CD4-positive, alpha-beta memory T cell (primary cell): ENCODE measurements at regions of chr4 and their contacts with region 1.

Region 1: GRCh38 chr4:82284858-82285805 is 88.7 kb downstream of the HNRNPD start:
- DNase-seq: peak; percentile 99
- H3K4me3 ChIP-seq: peak overlapping the region; percentile 25 to 70
- H3K4me3 Mint-ChIP-seq: peak overlapping the region; percentile 81 to 94 (median 86)
- H3K27ac ChIP-seq: peak overlapping the region; percentile 49
- H3K27ac Mint-ChIP-seq: peak overlapping the region; percentile 62 to 91 (median 88)
- H3K4me1 ChIP-seq: peaks cover 12% of the 10 kb centered on the region
- H3K4me1 Mint-ChIP-seq: peaks cover 8 to 19% (median 14%) of the 10 kb centered on the region in 4 donors
- H3K27me3 ChIP-seq: no peaks in the 10 kb centered on the region
- H3K27me3 Mint-ChIP-seq: no peaks in the 10 kb centered on the region

Region 2: DNA sequence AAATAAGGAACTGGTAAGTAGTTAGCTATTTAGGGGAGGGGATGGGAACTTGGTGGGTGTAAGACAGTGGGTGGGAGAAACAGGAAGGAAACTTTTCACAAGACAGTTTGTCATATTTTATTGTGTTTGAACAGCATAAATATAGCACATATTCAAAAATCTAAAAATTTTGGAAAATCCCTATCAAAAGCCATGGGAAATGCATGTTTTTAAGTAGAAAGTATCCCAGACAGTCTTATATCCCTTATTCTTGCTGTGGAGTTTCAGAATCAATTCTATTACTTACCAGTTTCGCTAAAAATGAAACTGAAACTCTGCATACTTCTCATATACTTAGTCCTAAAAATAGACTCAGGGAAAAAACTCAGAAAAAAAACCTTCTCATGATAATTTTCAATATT is 791.1 kb before region 1 on chr4:
- CTCF ChIA-PET with region 1: no interaction called
- POLR2A ChIA-PET with region 1: no interaction called
- intact Hi-C with region 1: loop called (anchors 5 kb)
- DNase-seq: peak in 2 of 5 donors; percentile 30 to 45
- H3K4me3 ChIP-seq: no peak overlapping the region
- H3K4me3 Mint-ChIP-seq: peak overlapping the region; percentile 73 to 88 (median 80)
- H3K27ac ChIP-seq: peak overlapping the region; percentile 59
- H3K27ac Mint-ChIP-seq: peak overlapping the region; percentile 84 to 96 (median 95)
- H3K4me1 ChIP-seq: peaks cover 41% of the 10 kb centered on the region
- H3K4me1 Mint-ChIP-seq: peaks cover 26 to 49% (median 39%) of the 10 kb centered on the region in 4 donors
- H3K27me3 ChIP-seq: no peaks in the 10 kb centered on the region
- H3K27me3 Mint-ChIP-seq: no peaks in the 10 kb centered on the region

Region 3: GRCh38 chr4:82360298-82361177 is 75.4 kb after region 1 on chr4:
- CTCF ChIA-PET with region 1: interaction called, 18 read pairs
- POLR2A ChIA-PET with region 1: interaction called, 10 read pairs
- intact Hi-C with region 1: no loop called
- DNase-seq: peak in 4 of 5 donors; percentile 39 to 42 (median 40)
- H3K4me3 ChIP-seq: no peak overlapping the region
- H3K4me3 Mint-ChIP-seq: peak overlapping the region in 5 of 8 donors; percentile 3 to 54 (median 17)
- H3K27ac ChIP-seq: peak overlapping the region; percentile 22
- H3K27ac Mint-ChIP-seq: peak overlapping the region; percentile 30 to 88 (median 62)
- H3K4me1 ChIP-seq: peaks cover 98% of the 10 kb centered on the region
- H3K4me1 Mint-ChIP-seq: peaks cover 59 to 94% (median 77%) of the 10 kb centered on the region in 4 donors
- H3K27me3 ChIP-seq: no peaks in the 10 kb centered on the region
- H3K27me3 Mint-ChIP-seq: no peaks in the 10 kb centered on the region

Region 4: DNA sequence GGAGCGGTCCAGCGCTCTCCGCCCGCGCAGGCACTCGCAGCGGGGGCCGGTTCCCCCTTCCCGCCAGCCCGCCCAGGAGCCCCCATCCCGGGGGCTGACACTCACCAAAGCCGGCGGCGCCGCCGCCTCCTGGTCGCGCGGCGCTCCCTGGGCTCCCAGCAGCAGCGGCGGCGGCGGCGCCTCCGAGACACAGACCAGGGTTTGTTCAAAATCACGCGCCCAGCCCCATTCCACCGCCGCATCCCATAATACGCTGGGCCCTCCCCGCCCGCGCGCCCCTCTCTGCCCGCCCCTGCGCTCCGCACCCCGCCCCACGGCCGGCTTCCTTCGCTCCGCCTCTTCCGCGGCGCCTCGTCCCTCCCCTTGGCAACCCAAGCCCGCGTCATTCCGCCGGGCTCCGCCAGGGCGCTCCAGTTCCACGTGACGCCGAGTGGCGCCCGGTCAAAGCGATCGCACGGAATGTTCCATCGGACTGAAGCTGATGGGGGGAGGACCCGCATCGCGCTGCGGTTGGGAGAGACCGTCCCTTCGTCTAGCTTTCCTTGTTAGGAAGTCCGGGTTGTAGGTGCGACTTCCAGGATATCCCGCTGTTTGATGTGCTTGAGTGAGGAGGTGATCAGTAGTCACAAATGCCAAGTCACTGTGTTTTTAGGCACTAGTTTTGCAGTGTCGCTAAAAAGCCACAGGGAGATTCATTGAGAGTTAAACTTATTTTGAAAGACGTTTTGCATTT is 727.7 kb after region 1 on chr4:
- CTCF ChIA-PET with region 1: no interaction called
- POLR2A ChIA-PET with region 1: no interaction called
- intact Hi-C with region 1: loop called (anchors 2 kb)
- DNase-seq: peak; percentile 96 to 99 (median 97)
- H3K4me3 ChIP-seq: peak overlapping the region; percentile 88 to 98
- H3K4me3 Mint-ChIP-seq: peak overlapping the region; percentile 91 to 97 (median 95)
- H3K27ac ChIP-seq: peak overlapping the region; percentile 89
- H3K27ac Mint-ChIP-seq: peak overlapping the region; percentile 87 to 97 (median 94)
- H3K4me1 ChIP-seq: peaks cover 43% of the 10 kb centered on the region
- H3K4me1 Mint-ChIP-seq: peaks cover 33 to 52% (median 39%) of the 10 kb centered on the region in 4 donors
- H3K27me3 ChIP-seq: no peaks in the 10 kb centered on the region
- H3K27me3 Mint-ChIP-seq: no peaks in the 10 kb centered on the region